ENCODE measurements at regions of chr15 and their contacts with region 1.

Region 1: DNA sequence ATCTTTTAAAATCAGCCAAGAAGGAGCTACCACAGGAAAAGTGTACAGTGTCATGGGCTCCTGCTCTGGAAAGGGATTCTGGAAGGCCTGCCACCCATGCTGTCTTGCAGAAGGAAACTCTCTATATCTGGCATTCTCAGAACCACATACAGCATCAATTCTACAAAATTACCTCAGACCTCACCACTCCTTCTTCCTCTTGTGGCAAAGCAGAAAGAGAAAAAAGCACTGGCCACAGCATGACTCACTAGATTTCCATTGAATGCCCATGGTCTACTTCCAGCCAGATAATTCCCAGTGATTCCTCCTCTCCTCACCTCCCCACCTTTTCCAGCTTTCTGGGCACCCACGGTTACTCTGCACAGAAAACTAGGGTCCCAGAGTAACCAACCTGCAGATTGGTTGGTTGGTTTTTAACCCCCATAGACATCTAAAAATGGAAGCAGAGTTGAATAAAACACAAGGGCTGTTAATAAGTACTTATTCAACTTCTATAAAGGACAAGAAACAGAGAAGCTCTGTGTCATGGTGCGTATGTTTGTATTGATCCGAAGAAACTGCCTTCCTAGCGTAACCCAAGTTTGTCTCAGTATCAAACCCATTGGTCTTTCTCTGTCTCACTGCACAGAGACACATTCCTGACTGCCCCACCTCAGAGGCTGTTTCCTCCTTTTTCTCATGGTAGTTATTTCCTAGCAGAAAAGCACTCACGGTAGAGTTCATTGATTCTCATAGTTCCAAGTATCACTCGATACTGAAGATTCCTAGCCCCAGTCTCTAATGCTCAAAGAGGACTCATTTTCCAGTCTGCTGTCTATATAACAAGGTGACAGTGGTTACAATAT is 67.7 kb downstream of the LDHAL6B start:
- DNase-seq: no peak
- ATAC-seq: no peak
- H3K4me3 ChIP-seq: no peak overlapping the region
- H3K27ac ChIP-seq: no peak overlapping the region
- H3K4me1 ChIP-seq: peaks cover 68% of the 10 kb centered on the region
- H3K27me3 ChIP-seq: no peaks in the 10 kb centered on the region
- CTCF ChIP-seq: no peak
- EP300 ChIP-seq: no peak
- POLR2A ChIP-seq: no peak
- RAD21 ChIP-seq: no peak

Region 2: GRCh38 chr15:59251001-59251845 is 23.1 kb before region 1 on chr15:
- CTCF ChIA-PET with region 1: no interaction called
- POLR2A ChIA-PET with region 1: no interaction called
- in situ Hi-C with region 1: no loop called
- intact Hi-C with region 1: no loop called
- DNase-seq: no peak
- ATAC-seq: no peak
- H3K4me3 ChIP-seq: no peak overlapping the region
- H3K27ac ChIP-seq: no peak overlapping the region
- H3K4me1 ChIP-seq: peaks cover 32% of the 10 kb centered on the region
- H3K27me3 ChIP-seq: no peaks in the 10 kb centered on the region
- CTCF ChIP-seq: no peak
- EP300 ChIP-seq: no peak
- POLR2A ChIP-seq: no peak
- RAD21 ChIP-seq: no peak

Region 3: DNA sequence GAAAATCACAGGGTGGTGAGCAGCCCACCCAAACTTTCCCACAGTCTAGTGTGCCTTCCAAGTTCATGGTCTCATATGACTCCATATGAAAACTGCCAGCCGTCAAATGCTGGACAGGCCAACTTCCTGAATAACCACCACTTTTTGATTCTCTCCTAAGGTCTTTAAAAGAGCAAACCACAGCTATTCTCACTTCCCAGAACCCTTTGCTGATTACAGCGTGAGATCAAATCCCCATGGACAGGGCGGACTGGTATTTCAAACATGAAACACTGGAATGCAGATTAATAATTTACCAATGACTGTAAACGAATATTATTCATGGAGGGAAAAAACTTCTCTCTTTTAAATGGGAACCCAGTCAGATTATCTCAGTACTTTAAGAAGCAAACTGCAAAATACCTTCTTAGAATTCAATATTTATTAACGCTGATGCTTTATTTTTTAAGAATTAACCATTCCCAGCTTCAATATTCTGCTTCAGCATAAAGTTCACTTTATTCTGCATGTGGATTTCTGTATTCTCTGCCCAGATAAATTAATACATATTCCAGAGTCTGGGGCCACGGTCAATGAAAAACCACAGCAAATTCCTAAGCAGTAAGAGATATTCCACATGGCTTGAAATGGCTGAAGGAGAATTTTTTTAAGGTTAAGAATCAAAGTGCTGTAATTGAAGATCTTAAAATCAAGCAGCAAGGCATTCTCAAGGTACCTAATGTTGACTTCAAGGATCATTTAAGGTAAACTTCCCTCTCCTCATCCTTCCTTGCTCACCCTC is 55.4 kb after region 1 on chr15:
- CTCF ChIA-PET with region 1: no interaction called
- POLR2A ChIA-PET with region 1: no interaction called
- in situ Hi-C with region 1: no loop called
- intact Hi-C with region 1: loop called (anchors 10 kb)
- DNase-seq: peak; percentile 76
- ATAC-seq: peak; percentile 89
- H3K4me3 ChIP-seq: no peak overlapping the region; a peak in 1 of 6 replicates
- H3K27ac ChIP-seq: peak overlapping the region; percentile 24
- H3K4me1 ChIP-seq: peaks cover 71% of the 10 kb centered on the region
- H3K27me3 ChIP-seq: no peaks in the 10 kb centered on the region
- CTCF ChIP-seq: no peak
- EP300 ChIP-seq: no peak; a peak in 1 of 4 replicates
- POLR2A ChIP-seq: no peak
- RAD21 ChIP-seq: no peak

Region 4: GRCh38 chr15:59611276-59612260 is 337.2 kb after region 1 on chr15 and contains the start of gene GCNT3:
- CTCF ChIA-PET with region 1: no interaction called
- POLR2A ChIA-PET with region 1: no interaction called
- in situ Hi-C with region 1: no loop called
- intact Hi-C with region 1: no loop called
- DNase-seq: peak; percentile 90
- ATAC-seq: peak; percentile 90
- H3K4me3 ChIP-seq: peak within 1 kb of the TSS; percentile 56 to 66 (median 63)
- H3K27ac ChIP-seq: peak within 1 kb of the TSS; percentile 64
- H3K4me1 ChIP-seq: peaks cover 61% of the 10 kb centered on the region
- H3K27me3 ChIP-seq: no peaks in the 10 kb centered on the region
- CTCF ChIP-seq: no peak
- EP300 ChIP-seq: peak in 1 of 2 experiments; percentile 68; a peak in 2 of 4 replicates
- POLR2A ChIP-seq: peak; percentile 28 to 40; a peak in 2 of 4 replicates
- RAD21 ChIP-seq: no peak
- total RNA-seq, gene GCNT3: 7.7 and 9.8 TPM in 2 replicates

Measured in HepG2 (cell line).